ENCODE measurements at regions of chr3 and their contacts with region 1.

Region 1: DNA sequence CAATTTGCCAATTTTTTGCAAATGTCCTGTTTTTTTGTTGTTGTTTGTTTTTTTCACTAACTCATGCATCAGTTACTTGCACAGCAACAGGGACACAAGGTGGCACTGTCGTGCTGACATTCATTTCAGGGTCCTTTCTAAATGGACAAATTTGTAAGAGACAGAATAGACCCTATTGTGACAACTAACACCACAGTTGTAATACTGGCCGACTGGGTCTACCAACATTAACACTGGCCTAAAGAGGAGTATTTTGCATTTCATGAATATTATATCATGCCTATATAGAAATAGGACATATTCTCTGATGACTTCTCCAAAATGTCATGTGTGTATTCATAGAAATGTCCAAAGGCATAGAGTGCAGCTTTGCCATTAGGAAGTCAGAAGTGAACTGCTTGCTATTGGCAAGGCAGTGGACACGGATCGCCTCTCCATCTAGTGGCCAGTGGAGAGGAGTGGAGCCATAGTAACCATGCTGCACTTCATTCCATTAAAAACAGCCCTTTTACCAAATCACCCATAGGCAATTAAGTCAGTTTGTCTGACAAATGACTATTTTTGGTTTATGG is 54.8 kb downstream of the ZBTB20 start:
- DNase-seq: peak; percentile 89

Region 2: DNA sequence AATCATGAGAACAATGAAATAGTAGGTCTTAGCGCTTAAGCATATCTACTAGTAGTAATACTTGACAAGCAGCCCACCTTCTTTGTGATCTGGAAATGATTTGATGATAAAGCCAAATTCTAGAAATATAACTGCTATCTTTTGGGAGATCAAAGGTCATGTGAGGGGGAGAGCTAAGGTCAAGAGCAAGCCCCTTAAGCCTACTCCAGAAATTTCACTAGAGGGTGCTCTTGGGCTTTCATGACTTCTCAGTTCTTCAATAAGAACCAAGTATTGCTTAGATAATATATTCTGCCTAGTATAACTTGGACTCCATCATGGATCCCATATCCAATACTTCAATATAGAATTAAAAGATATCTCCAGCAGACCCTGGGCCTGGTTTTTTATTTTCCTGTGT is 264.8 kb before region 1 on chr3:
- in situ Hi-C with region 1: loop called (anchors 25 kb)
- DNase-seq: peak; percentile 83